ENCODE measurements at regions of chr17 and their contacts with region 1.

Region 1: GRCh38 chr17:73231841-73232586 is 29.7 kb downstream of the CPSF4L start:
- DNase-seq: peak; percentile 96
- H3K4me3 ChIP-seq: peak overlapping the region; percentile 83 to 93 (median 84)
- H3K27ac ChIP-seq: peak overlapping the region; percentile 83
- H3K4me1 ChIP-seq: peaks cover 38% of the 10 kb centered on the region
- H3K27me3 ChIP-seq: no peaks in the 10 kb centered on the region
- CTCF ChIP-seq: no peak
- POLR2A ChIP-seq: peak; percentile 29

Region 2: GRCh38 chr17:73092523-73093135 is 139.4 kb before region 1 on chr17 and contains the start of gene SLC39A11:
- CTCF ChIA-PET with region 1: no interaction called
- POLR2A ChIA-PET with region 1: no interaction called
- dilution Hi-C with region 1: no loop called
- intact Hi-C with region 1: loop called (anchors 5 kb)
- DNase-seq: peak; percentile 92
- H3K4me3 ChIP-seq: peak within 1 kb of the TSS; percentile 47 to 83 (median 61)
- H3K27ac ChIP-seq: no peak within 1 kb of the TSS
- H3K4me1 ChIP-seq: peaks cover 9% of the 10 kb centered on the region
- H3K27me3 ChIP-seq: no peaks in the 10 kb centered on the region
- CTCF ChIP-seq: no peak
- POLR2A ChIP-seq: peak; percentile 73
- total RNA-seq, gene SLC39A11: 11.9 and 12.4 TPM in 2 replicates

Region 3: GRCh38 chr17:73203135-73203787 is 28.8 kb before region 1 on chr17:
- CTCF ChIA-PET with region 1: interaction called, 11 read pairs
- POLR2A ChIA-PET with region 1: interaction called, 4 read pairs
- dilution Hi-C with region 1: no loop called
- intact Hi-C with region 1: loop called (anchors 1 kb)
- DNase-seq: peak; percentile 90
- H3K4me3 ChIP-seq: no peak overlapping the region
- H3K27ac ChIP-seq: peak overlapping the region; percentile 81
- H3K4me1 ChIP-seq: peaks cover 24% of the 10 kb centered on the region
- H3K27me3 ChIP-seq: no peaks in the 10 kb centered on the region
- CTCF ChIP-seq: no peak
- POLR2A ChIP-seq: no peak

Region 4: DNA sequence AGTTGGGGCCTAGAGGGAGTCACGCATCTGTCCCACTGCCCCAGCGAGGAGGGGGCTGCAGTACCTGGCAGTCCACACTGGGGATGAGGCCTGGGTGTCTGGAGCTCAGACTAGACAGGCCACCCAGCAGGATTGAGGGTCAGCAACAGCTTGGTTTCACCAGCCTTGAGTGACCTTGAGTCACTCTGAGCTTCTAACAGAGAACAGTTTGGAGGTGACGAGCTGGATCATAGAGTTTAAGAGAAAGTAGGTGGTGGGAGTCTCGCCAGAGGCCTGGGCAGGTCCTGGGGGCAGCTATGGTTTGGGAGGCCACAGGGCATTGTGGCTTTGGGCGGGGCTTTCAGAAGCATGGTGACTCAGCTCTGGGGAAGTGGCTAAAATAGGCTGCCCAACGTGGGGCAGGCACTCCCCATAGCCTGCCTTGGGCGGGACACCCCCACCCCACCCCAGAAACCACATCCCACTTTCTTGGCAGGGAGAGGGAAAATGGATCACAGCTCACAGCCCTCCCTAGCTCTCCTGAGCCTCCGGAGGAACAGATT is 59.3 kb after region 1 on chr17:
- CTCF ChIA-PET with region 1: no interaction called
- POLR2A ChIA-PET with region 1: interaction called, 3 read pairs
- dilution Hi-C with region 1: no loop called
- intact Hi-C with region 1: loop called (anchors 5 kb)
- DNase-seq: peak; percentile 18
- H3K4me3 ChIP-seq: no peak overlapping the region
- H3K27ac ChIP-seq: peak overlapping the region; percentile 79
- H3K4me1 ChIP-seq: peaks cover 25% of the 10 kb centered on the region
- H3K27me3 ChIP-seq: no peaks in the 10 kb centered on the region
- CTCF ChIP-seq: no peak
- POLR2A ChIP-seq: no peak

Region 5: DNA sequence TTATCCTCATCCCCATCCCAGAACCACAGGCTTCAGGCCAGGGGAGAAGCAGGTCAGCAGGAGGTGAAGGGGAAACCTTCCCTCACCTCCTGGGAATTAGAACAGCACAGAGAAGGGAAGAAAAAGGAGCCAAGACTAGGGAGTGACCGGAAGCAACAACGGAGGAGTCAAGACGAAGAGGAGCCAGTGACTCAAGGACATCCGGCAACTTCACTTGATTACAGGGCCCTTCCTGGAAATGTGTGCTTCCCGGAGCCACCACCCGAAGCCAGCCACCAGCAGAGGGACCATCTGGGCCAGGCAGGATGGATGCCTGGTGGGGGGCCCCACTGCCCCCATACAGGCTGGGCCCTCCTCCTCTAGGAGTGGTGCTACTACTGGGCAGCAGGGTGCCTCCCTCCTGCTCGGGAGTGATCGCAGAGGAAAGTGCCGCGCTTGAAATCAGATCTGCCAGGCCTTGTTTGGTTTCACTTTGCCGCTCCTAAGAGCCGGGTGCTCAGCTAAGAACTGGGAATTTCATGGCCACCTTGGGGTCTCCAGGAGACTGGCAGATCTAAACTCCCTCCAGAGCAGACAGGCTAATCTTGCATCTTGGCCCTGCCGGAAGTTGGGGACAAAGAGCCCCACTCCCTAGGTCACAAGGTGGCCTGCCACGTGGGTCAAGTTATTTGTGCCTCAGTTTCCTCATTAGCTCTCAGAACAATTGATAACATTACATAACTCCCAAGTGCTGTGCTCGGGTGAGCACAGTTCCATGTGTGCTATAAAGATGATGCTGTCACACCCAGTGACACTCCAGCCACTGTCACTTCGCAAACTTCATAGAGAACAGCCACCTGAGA is 73.2 kb after region 1 on chr17:
- CTCF ChIA-PET with region 1: interaction called, 7 read pairs
- POLR2A ChIA-PET with region 1: no interaction called
- dilution Hi-C with region 1: no loop called
- intact Hi-C with region 1: loop called (anchors 2 kb)
- DNase-seq: peak; percentile 80
- H3K4me3 ChIP-seq: peak overlapping the region in 2 of 3 experiments; percentile 20 to 54
- H3K27ac ChIP-seq: peak overlapping the region; percentile 78
- H3K4me1 ChIP-seq: peaks cover 54% of the 10 kb centered on the region
- H3K27me3 ChIP-seq: no peaks in the 10 kb centered on the region
- CTCF ChIP-seq: peak; percentile 31 to 40
- POLR2A ChIP-seq: peak; percentile 58

Region 6: GRCh38 chr17:74203439-74204240 is 971.6 kb after region 1 on chr17 and contains the start of gene RPL38:
- CTCF ChIA-PET with region 1: interaction called, 4 read pairs
- POLR2A ChIA-PET with region 1: no interaction called
- dilution Hi-C with region 1: no loop called
- intact Hi-C with region 1: loop called (anchors 10 kb)
- DNase-seq: peak; percentile 97
- H3K4me3 ChIP-seq: peak within 1 kb of the TSS; percentile 72 to 87 (median 78)
- H3K27ac ChIP-seq: peak within 1 kb of the TSS; percentile 74
- H3K4me1 ChIP-seq: peaks cover 22% of the 10 kb centered on the region
- H3K27me3 ChIP-seq: peaks cover 8 to 14% of the 10 kb centered on the region in 2 experiments
- CTCF ChIP-seq: peak; percentile 97 to 99
- POLR2A ChIP-seq: peak; percentile 98
- total RNA-seq, gene RPL38: 1,006 and 1,060 TPM in 2 replicates

Measured in endothelial cell of umbilical vein (primary cell).